ENCODE measurements at regions of chr14 and their contacts with region 1.

Region 1: DNA sequence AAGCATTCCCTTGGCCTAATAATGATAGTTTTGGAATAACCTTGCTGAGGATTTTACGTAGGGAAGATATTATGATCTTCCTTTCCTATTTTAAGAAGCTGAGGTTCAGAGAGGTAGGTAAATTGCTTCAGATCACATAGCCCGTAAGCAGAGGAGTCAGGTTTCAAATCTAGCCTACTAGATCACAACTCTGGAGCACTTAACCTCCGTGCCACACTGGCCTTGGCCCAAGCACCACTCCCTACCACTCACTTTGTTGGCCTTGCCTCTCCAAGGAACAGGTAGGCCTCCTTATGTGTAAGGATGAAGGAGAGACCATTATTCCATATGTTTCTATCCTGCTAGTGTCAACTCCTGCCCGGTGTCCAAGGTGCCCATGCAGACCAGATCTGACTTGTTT is 12.4 kb upstream of the ACOT1 start:
- DNase-seq: no peak
- CTCF ChIP-seq: no peak

Region 2: GRCh38 chr14:72962829-72963312 is 561.6 kb before region 1 on chr14:
- in situ Hi-C with region 1: no loop called
- DNase-seq: no peak
- CTCF ChIP-seq: no peak

Region 3: GRCh38 chr14:73136387-73137225 is 387.9 kb before region 1 on chr14 and contains the start of gene PSEN1:
- in situ Hi-C with region 1: no loop called
- DNase-seq: peak; percentile 99
- CTCF ChIP-seq: no peak

Region 4: GRCh38 chr14:73173092-73173735 is 351.3 kb before region 1 on chr14:
- in situ Hi-C with region 1: no loop called
- DNase-seq: peak; percentile 50
- CTCF ChIP-seq: peak; percentile 8

Region 5: DNA sequence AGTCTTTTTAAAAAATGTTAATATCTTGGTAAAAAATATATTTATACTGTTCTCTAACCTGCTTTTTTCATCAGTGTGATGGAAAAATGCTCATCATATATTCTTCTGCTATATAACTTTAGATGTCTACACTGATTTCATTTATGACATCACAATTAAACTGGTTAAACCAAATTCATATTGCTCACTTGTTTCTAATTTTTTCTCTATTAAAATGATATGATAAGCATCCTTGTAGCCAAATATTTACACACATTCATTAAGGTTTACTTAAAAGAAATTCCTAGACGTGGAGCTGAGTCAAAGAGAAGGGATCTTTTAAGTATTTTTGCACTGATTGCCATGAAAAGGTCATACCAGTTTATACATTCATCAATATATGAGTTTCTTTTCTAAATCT is 40.4 kb after region 1 on chr14:
- in situ Hi-C with region 1: loop called (anchors 5 kb)
- DNase-seq: no peak
- CTCF ChIP-seq: no peak